Heart left ventricle (tissue), 16 donors: ENCODE measurements at regions of chr15 and their contacts with region 1.

Region 1: DNA sequence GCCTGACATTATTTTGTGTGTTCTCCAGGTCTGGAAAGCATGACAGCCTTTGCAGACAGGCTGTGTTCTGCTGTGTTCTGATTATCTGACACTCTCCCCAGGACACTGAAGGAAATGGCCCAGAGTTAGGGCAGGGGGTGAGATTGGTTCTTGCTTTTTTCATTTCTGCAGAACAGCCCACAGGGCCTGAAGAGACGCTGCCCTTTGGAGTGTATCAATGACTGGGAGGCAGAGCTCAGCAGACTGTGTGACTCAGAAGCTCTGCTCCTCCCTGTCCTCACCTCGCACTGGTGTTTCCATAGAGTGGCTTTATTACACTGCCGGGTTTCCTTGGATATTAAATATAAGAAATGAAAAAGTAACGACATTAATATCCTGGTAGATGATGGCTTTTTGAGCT is 523.6 kb downstream of the NTRK3 start:
- DNase-seq: no peak
- ATAC-seq: peak in 2 of 4 donors; percentile 38 to 59
- H3K4me3 ChIP-seq: no peak overlapping the region
- H3K27ac ChIP-seq: no peak overlapping the region
- H3K4me1 ChIP-seq: peaks cover 0 to 15% (median 3%) of the 10 kb centered on the region in 12 donors
- H3K27me3 ChIP-seq: no peaks in the 10 kb centered on the region
- CTCF ChIP-seq: no peak
- POLR2A ChIP-seq: no peak

Region 2: DNA sequence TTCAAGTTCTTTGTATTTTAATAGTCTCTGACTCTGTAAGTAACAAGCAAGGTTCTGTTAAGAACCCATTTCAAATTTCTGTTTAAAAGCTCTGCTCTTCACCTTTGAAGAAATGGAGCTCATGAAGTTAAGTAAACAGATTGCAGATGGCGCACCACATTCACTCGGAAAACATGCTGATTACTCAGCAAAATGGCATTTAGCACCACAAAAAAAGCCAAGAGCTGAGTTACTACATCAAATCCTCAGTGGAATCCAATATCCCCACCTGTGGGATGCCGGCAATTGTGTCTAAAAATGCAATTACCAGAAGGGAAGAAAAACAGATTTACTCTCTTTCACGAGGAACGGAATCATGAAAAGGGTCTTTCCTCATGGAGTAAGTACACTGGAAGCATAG is 234.4 kb before region 1 on chr15:
- intact Hi-C with region 1: loop called in 1 of 10 experiments (anchors 10 kb)
- DNase-seq: no peak
- ATAC-seq: no peak
- H3K4me3 ChIP-seq: no peak overlapping the region
- H3K27ac ChIP-seq: no peak overlapping the region
- H3K4me1 ChIP-seq: peaks cover 0 to 26% (median 8%) of the 10 kb centered on the region in 12 donors
- H3K27me3 ChIP-seq: no peaks in the 10 kb centered on the region
- CTCF ChIP-seq: no peak
- POLR2A ChIP-seq: no peak

Region 3: GRCh38 chr15:87715252-87715651 is 17.7 kb before region 1 on chr15:
- intact Hi-C with region 1: loop called in 1 of 10 experiments (anchors 2 kb)
- DNase-seq: no peak
- ATAC-seq: no peak
- H3K4me3 ChIP-seq: no peak overlapping the region
- H3K27ac ChIP-seq: no peak overlapping the region
- H3K4me1 ChIP-seq: peaks cover 0 to 20% (median 0%) of the 10 kb centered on the region in 12 donors
- H3K27me3 ChIP-seq: no peaks in the 10 kb centered on the region
- CTCF ChIP-seq: no peak
- POLR2A ChIP-seq: no peak

Region 4: DNA sequence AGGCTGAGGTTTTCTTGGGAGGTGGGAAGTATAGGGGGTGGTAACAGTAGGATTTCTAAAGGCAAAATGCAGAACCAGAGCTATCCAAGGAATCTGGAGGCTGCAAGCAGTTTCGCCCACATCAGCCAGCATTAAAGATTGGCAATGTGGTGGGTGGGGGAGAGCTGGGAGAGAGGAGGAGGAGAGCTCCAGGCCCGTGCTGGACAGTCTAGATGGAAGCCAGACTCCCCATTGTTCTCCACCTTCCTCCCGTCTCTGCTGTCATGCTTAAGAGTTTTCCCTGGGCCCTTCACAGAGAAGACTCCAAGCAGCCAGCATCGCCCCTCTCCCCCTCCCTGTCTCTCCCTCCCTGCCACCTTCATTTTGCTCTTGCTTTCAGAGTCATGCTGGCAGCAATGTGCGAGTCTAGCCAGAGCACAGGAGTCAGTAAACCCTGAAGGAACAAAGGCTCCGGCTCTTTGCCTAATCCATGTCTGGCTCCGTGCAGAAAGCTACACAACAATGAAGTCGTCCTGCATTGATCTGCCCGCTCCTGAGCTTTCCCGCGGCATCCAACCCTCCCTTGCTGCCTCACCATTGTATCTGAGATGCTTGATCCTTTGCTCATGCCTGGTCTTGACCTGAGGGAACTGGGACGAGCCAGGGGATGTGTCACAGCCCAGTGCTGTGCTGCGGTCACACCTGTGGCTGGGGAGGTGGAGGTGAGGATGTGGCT is 240.7 kb after region 1 on chr15:
- intact Hi-C with region 1: no loop called
- DNase-seq: no peak
- ATAC-seq: peak in 1 of 4 donors; percentile 21
- H3K4me3 ChIP-seq: no peak overlapping the region
- H3K27ac ChIP-seq: no peak overlapping the region
- H3K4me1 ChIP-seq: no peaks in the 10 kb centered on the region
- H3K27me3 ChIP-seq: no peaks in the 10 kb centered on the region
- CTCF ChIP-seq: no peak
- POLR2A ChIP-seq: no peak